ENCODE measurements at regions of chr3 and their contacts with region 1.

Region 1: GRCh38 chr3:20185701-20186598 is at the start of gene SGO1:
- DNase-seq: peak; percentile 99
- H3K4me3 Mint-ChIP-seq: no peak within 1 kb of the TSS
- H3K27ac Mint-ChIP-seq: no peak within 1 kb of the TSS
- H3K4me1 Mint-ChIP-seq: peaks cover 2% of the 10 kb centered on the region
- H3K27me3 Mint-ChIP-seq: no peaks in the 10 kb centered on the region
- total RNA-seq, gene SGO1: 36.2 to 37.5 TPM

Region 2: GRCh38 chr3:19016851-19017250 is 1169.1 kb before region 1 on chr3:
- CTCF ChIA-PET with region 1: no interaction called
- intact Hi-C with region 1: no loop called
- DNase-seq: no peak
- H3K4me3 Mint-ChIP-seq: no peak overlapping the region
- H3K27ac Mint-ChIP-seq: no peak overlapping the region
- H3K4me1 Mint-ChIP-seq: no peaks in the 10 kb centered on the region
- H3K27me3 Mint-ChIP-seq: no peaks in the 10 kb centered on the region

Region 3: GRCh38 chr3:19937459-19938294 is 248.3 kb before region 1 on chr3:
- CTCF ChIA-PET with region 1: no interaction called
- intact Hi-C with region 1: loop called (anchors 2 kb)
- DNase-seq: peak; percentile 31
- H3K4me3 Mint-ChIP-seq: no peak overlapping the region
- H3K27ac Mint-ChIP-seq: peak overlapping the region; percentile 63
- H3K4me1 Mint-ChIP-seq: peaks cover 13% of the 10 kb centered on the region
- H3K27me3 Mint-ChIP-seq: peaks cover 6% of the 10 kb centered on the region

Measured in activated naive CD4-positive, alpha-beta T cell treated with anti-CD3 and anti-CD28 coated beads for 36 hours (primary cell).